ENCODE measurements at regions of chr14 and their contacts with region 1.

Region 1: GRCh38 chr14:76947078-76947837 is 81.2 kb downstream of the IRF2BPL start:
- DNase-seq: peak; percentile 59 to 92 (median 71)
- ATAC-seq: peak; percentile 98
- H3K4me3 ChIP-seq: peak overlapping the region; percentile 8
- H3K4me3 Mint-ChIP-seq: no peak overlapping the region
- H3K27ac ChIP-seq: peak overlapping the region in 1 of 2 donors; percentile 5
- H3K27ac Mint-ChIP-seq: peak overlapping the region; percentile 47
- H3K4me1 ChIP-seq: peaks cover 30% of the 10 kb centered on the region
- H3K4me1 Mint-ChIP-seq: peaks cover 30% of the 10 kb centered on the region
- H3K27me3 ChIP-seq: no peaks in the 10 kb centered on the region
- H3K27me3 Mint-ChIP-seq: no peaks in the 10 kb centered on the region
- CTCF ChIP-seq: peak; percentile 58

Region 2: GRCh38 chr14:76250302-76250701 is 697.0 kb before region 1 on chr14:
- CTCF ChIA-PET with region 1: no interaction called
- POLR2A ChIA-PET with region 1: no interaction called
- intact Hi-C with region 1: no loop called
- DNase-seq: no peak
- ATAC-seq: no peak
- H3K4me3 ChIP-seq: no peak overlapping the region
- H3K4me3 Mint-ChIP-seq: no peak overlapping the region
- H3K27ac ChIP-seq: no peak overlapping the region
- H3K27ac Mint-ChIP-seq: no peak overlapping the region
- H3K4me1 ChIP-seq: no peaks in the 10 kb centered on the region
- H3K4me1 Mint-ChIP-seq: no peaks in the 10 kb centered on the region
- H3K27me3 ChIP-seq: no peaks in the 10 kb centered on the region
- H3K27me3 Mint-ChIP-seq: peaks cover 3% of the 10 kb centered on the region
- CTCF ChIP-seq: no peak

Region 3: DNA sequence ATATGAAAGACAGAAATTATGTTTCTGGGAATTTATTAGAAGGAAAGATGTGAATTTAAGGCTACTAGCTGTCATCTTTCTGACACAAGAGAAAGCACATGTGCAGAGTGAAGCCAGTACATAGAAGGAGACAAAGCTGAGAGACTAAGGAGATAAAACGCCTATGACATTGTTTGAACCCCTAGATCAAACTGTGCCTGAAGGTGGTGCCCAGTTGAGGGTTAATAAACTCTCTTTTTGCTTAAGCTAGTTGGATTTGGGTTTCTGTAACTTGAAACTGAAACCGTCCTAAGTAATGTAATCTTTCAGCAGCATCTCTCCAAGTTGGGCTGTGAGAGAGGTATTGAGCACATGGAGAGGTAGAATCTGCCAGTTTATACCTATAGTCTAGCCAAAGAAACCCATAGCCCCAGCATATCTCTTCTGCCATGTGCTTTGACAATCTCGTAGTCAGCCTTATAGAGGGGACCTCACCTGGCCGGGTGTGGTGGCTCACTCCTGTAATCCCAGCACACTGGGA is 36.8 kb before region 1 on chr14:
- CTCF ChIA-PET with region 1: interaction called, 17 read pairs
- POLR2A ChIA-PET with region 1: no interaction called
- intact Hi-C with region 1: loop called (anchors 1 kb)
- DNase-seq: no peak
- ATAC-seq: no peak
- H3K4me3 ChIP-seq: no peak overlapping the region
- H3K4me3 Mint-ChIP-seq: no peak overlapping the region
- H3K27ac ChIP-seq: no peak overlapping the region
- H3K27ac Mint-ChIP-seq: no peak overlapping the region
- H3K4me1 ChIP-seq: peaks cover 40% of the 10 kb centered on the region
- H3K4me1 Mint-ChIP-seq: peaks cover 36% of the 10 kb centered on the region
- H3K27me3 ChIP-seq: no peaks in the 10 kb centered on the region
- H3K27me3 Mint-ChIP-seq: no peaks in the 10 kb centered on the region
- CTCF ChIP-seq: no peak

Region 4: GRCh38 chr14:77000340-77001270 is 53.3 kb after region 1 on chr14:
- CTCF ChIA-PET with region 1: no interaction called
- POLR2A ChIA-PET with region 1: no interaction called
- intact Hi-C with region 1: no loop called
- DNase-seq: peak in 3 of 14 experiments; percentile 14 to 65 (median 59)
- ATAC-seq: peak; percentile 78
- H3K4me3 ChIP-seq: peak overlapping the region; percentile 14
- H3K4me3 Mint-ChIP-seq: peak overlapping the region; percentile 55
- H3K27ac ChIP-seq: no peak overlapping the region
- H3K27ac Mint-ChIP-seq: peak overlapping the region; percentile 12
- H3K4me1 ChIP-seq: peaks cover 10% of the 10 kb centered on the region
- H3K4me1 Mint-ChIP-seq: peaks cover 9% of the 10 kb centered on the region
- H3K27me3 ChIP-seq: no peaks in the 10 kb centered on the region
- H3K27me3 Mint-ChIP-seq: no peaks in the 10 kb centered on the region
- CTCF ChIP-seq: no peak

Region 5: DNA sequence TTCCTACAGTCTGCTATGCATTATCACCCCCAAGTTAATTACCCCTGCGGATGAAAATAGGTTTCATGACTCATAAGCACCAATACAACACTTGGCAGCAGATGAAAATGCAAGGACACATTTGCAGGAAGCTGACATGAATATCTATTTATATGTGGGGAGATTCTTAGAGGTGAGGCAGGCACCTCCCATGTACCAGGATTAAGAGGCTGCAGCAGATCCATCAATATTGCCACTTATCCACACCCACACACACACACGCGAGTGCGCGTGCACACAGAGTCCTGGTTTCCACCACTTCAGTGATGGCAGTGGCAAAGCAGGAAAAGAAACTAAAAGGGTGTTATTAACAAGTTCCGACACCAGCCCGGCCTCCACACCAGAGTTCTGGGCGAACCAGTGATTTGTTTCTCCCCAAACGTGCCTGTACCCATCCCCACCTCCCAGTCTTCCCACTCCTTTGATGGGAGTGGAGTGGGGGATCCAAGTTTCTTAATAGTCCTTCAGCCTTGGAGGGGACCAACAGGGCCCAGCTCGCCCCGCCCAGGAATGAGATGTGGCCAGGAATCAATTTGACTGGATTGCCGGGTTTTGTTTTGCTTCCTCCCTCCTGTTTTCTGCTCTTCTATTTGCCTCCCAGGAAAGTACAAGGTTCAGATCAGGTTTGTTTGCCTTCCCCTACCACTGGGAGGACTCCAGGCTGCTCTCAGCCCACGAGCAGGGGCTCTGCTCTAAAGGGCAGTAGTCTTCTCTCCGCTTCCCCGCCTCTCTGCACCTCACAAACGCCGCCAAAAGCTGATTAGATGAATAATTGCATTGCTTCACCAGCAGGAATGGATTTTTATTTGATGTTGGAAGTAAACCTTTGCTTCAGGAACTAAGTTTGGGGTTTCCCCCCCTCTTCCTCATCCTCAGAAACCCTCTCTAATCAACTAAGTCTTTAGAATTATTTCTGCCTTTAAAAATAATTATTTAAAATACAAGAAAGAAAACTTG is 76.0 kb after region 1 on chr14:
- CTCF ChIA-PET with region 1: interaction called, 13 read pairs
- POLR2A ChIA-PET with region 1: interaction called, 9 read pairs
- intact Hi-C with region 1: no loop called
- DNase-seq: peak in 1 of 14 experiments; percentile 33
- ATAC-seq: no peak
- H3K4me3 ChIP-seq: no peak overlapping the region
- H3K4me3 Mint-ChIP-seq: peak overlapping the region; percentile 69
- H3K27ac ChIP-seq: no peak overlapping the region
- H3K27ac Mint-ChIP-seq: peak overlapping the region; percentile 90
- H3K4me1 ChIP-seq: peaks cover 54% of the 10 kb centered on the region
- H3K4me1 Mint-ChIP-seq: peaks cover 36% of the 10 kb centered on the region
- H3K27me3 ChIP-seq: no peaks in the 10 kb centered on the region
- H3K27me3 Mint-ChIP-seq: no peaks in the 10 kb centered on the region
- CTCF ChIP-seq: no peak

Region 6: GRCh38 chr14:77040059-77040740 is 92.9 kb after region 1 on chr14:
- CTCF ChIA-PET with region 1: interaction called, 10 read pairs
- POLR2A ChIA-PET with region 1: interaction called, 6 read pairs
- intact Hi-C with region 1: no loop called
- DNase-seq: peak; percentile 96 to 100 (median 99)
- ATAC-seq: peak; percentile 79
- H3K4me3 ChIP-seq: peak overlapping the region; percentile 46
- H3K4me3 Mint-ChIP-seq: peak overlapping the region; percentile 84
- H3K27ac ChIP-seq: peak overlapping the region; percentile 93 to 96
- H3K27ac Mint-ChIP-seq: peak overlapping the region; percentile 100
- H3K4me1 ChIP-seq: peaks cover 86% of the 10 kb centered on the region
- H3K4me1 Mint-ChIP-seq: peaks cover 96% of the 10 kb centered on the region
- H3K27me3 ChIP-seq: no peaks in the 10 kb centered on the region
- H3K27me3 Mint-ChIP-seq: no peaks in the 10 kb centered on the region
- CTCF ChIP-seq: no peak

Region 7: GRCh38 chr14:77053046-77053841 is 106.0 kb after region 1 on chr14:
- CTCF ChIA-PET with region 1: interaction called, 12 read pairs
- POLR2A ChIA-PET with region 1: interaction called, 3 read pairs
- intact Hi-C with region 1: loop called in 1 of 2 experiments (anchors 1 kb)
- DNase-seq: peak; percentile 62 to 90 (median 72)
- ATAC-seq: peak; percentile 87
- H3K4me3 ChIP-seq: no peak overlapping the region
- H3K4me3 Mint-ChIP-seq: no peak overlapping the region
- H3K27ac ChIP-seq: no peak overlapping the region
- H3K27ac Mint-ChIP-seq: no peak overlapping the region
- H3K4me1 ChIP-seq: peaks cover 28% of the 10 kb centered on the region
- H3K4me1 Mint-ChIP-seq: peaks cover 18% of the 10 kb centered on the region
- H3K27me3 ChIP-seq: no peaks in the 10 kb centered on the region
- H3K27me3 Mint-ChIP-seq: no peaks in the 10 kb centered on the region
- CTCF ChIP-seq: peak; percentile 95

Measured in CD4-positive, alpha-beta T cell (primary cell).